WTC11 (cell line): ENCODE measurements at regions of chr12 and their contacts with region 1.

Region 1: DNA sequence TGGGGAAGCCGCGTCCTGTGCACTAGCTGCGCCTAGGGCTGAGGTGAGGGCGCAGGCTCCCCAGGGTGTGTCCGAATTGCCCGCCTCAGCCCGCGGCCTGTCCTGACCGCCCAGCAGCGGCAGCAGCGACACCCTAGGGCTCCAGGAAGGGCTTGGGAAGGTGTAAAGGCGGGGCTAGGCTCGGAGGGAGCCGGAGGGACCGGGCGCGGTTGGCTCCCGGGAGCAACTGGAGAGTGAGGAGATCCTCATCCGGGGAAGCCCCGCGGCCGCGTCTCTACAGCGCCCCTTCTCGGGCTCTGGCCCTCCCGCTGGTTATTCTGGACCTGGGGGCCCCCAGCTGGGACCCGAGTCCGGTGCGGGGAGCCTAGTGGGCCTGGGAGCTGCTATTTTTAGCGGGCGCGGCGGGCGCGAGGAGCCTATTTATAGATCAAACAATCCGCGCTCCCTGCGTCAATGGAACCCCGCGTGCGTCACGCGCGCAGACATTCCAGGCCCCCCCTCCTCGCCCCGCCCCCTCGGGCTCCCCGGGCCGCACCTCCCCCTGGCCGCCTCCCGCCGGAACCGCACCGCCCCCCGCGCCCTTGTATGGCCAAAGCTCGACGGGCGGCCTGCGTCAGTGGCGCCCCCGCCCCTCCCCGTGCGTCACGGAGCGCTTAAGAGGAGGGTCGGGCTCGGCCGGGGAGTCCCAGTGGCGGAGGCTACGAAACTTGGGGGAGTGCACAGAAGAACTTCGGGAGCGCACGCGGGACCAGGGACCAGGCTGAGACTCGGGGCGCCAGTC is at the start of gene NR4A1:
- DNase-seq: peak; percentile 90
- ATAC-seq: peak; percentile 68
- H3K4me3 Mint-ChIP-seq: peak within 1 kb of the TSS; percentile 86
- H3K27ac Mint-ChIP-seq: peak within 1 kb of the TSS; percentile 87
- H3K4me1 Mint-ChIP-seq: peaks cover 28% of the 10 kb centered on the region
- H3K27me3 Mint-ChIP-seq: peaks cover 50% of the 10 kb centered on the region
- CTCF ChIP-seq: no peak
- total RNA-seq, gene NR4A1: 19.2 to 26.9 TPM (median 22.0 TPM) in 3 replicates

Region 2: DNA sequence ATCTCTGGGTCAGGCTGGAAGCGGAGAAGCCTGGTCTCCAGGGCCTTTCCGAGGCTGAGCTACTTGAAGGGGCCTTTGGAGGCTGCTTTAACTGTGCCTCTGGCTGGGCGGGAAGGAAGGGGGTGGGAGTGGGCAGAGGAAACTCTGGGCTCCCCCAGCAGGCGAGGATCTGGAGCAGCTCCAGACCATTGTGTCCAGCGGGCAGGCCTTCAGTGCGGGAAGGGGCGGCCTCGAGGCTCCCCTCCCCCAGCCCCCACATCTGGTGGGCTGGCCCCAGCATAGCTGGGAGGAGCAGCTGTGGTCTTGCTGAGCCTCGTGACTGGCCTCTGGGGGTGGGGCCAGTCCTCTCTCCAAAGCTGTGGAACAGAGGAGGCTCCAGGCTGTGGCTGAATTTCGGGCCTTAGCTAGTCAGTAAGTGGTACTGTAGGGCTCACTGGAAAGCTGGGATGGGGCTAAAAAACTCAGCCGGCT is 40.8 kb before region 1 on chr12:
- CTCF ChIA-PET with region 1: interaction called, 10 read pairs
- POLR2A ChIA-PET with region 1: no interaction called
- DNase-seq: peak; percentile 81
- ATAC-seq: peak; percentile 75
- H3K4me3 Mint-ChIP-seq: no peak overlapping the region
- H3K27ac Mint-ChIP-seq: 0 out of 2 replicates have a peak overlapping the region, but pooled peaks have one; percentile 42
- H3K4me1 Mint-ChIP-seq: peaks cover 41% of the 10 kb centered on the region
- H3K27me3 Mint-ChIP-seq: peaks cover 68% of the 10 kb centered on the region
- CTCF ChIP-seq: no peak

Region 3: DNA sequence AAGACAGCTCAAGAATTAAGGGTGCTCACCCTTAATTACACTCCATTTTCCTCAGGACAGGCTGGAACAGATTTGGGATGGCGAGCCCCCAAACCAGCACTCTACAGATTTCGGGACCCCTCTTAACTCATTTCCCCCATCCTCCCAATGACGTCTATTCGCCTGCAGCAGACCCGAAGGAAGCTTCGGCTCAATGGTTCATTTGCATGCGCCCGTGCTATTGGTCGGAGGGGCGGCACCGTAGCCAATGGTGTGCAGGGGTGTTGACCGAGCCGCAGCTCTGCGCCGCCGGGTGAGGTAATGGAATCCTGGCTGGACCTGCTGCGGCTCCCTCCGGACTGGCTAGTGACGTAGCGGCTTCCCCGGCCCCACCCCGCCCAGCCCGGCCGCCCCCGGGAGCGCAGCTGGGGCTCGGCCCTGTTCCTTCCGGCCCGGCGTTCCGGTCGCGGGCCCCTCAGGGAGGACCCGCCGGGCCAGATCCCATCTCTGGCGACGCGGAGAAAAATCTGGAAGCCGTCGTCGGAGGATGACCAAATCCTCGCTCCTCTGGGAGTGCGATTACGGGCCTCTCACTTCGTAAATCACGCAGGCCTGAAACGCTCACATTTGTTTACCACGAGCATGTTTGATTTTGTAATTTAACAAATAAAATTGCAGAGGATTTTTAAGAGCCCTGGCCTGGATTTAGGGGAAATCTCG is 18.0 kb before region 1 on chr12:
- CTCF ChIA-PET with region 1: interaction called, 10 read pairs
- POLR2A ChIA-PET with region 1: interaction called, 11 read pairs
- DNase-seq: peak; percentile 97
- ATAC-seq: peak; percentile 93
- H3K4me3 Mint-ChIP-seq: peak overlapping the region; percentile 69
- H3K27ac Mint-ChIP-seq: peak overlapping the region; percentile 95
- H3K4me1 Mint-ChIP-seq: peaks cover 31% of the 10 kb centered on the region
- H3K27me3 Mint-ChIP-seq: peaks cover 46% of the 10 kb centered on the region
- CTCF ChIP-seq: no peak

Region 4: GRCh38 chr12:52063981-52064649 is 13.2 kb after region 1 on chr12:
- CTCF ChIA-PET with region 1: interaction called, 10 read pairs
- POLR2A ChIA-PET with region 1: interaction called, 3 read pairs
- DNase-seq: no peak
- ATAC-seq: no peak
- H3K4me3 Mint-ChIP-seq: no peak overlapping the region
- H3K27ac Mint-ChIP-seq: 0 out of 2 replicates have a peak overlapping the region, but pooled peaks have one; percentile 27
- H3K4me1 Mint-ChIP-seq: no peaks in the 10 kb centered on the region; the same call in 1 of the 2 replicates
- H3K27me3 Mint-ChIP-seq: peaks cover 6% of the 10 kb centered on the region
- CTCF ChIP-seq: no peak

Region 5: DNA sequence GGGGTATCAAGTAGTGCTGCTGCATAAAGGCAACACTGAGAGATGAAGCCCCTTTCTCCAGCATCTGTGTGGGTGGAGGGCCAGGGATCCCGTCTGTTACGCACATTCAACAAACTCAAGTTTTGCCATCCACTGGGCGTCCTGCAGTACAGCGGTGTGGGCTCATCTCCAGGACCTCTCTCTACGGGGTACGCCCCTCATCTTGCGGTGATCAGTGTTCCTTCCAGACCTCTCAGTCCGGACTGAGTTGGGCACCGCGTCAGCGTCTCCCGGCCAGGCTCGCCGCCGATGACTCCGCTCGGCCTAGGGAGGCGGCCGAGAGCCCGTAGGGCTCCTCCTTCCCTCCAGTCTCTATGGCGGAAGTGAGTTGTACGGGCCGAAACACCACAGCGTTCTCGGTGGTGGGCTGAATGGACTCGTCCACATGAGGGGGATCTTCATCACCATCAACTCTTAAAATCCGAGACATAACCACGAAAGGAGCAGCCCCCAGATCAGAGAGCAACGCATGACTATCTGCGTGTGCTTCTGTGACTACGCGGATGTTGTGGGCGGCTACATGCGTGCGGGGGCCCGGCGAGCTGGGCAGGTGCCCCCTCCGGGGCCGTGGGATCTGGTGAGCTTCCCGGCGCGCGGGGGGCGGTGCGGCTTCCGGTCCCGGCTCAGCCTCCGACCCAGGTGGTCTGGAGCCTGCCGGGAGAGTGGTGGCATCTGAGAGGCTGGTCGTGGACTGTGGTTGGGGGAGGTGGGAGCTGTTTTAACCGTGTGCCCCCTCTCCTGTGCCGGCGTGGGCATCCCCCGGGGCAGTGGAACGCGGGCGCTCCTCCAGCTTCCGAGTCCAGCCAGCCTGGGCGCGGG is 18.6 kb after region 1 on chr12 and contains the start of gene ATG101:
- CTCF ChIA-PET with region 1: interaction called, 10 read pairs
- POLR2A ChIA-PET with region 1: interaction called, 4 read pairs
- DNase-seq: peak; percentile 91
- ATAC-seq: peak; percentile 98
- H3K4me3 Mint-ChIP-seq: peak within 1 kb of the TSS; percentile 97
- H3K27ac Mint-ChIP-seq: peak within 1 kb of the TSS; percentile 99
- H3K4me1 Mint-ChIP-seq: peaks cover 14% of the 10 kb centered on the region
- H3K27me3 Mint-ChIP-seq: peaks cover 9% of the 10 kb centered on the region
- CTCF ChIP-seq: no peak
- total RNA-seq, gene ATG101: 43.3 to 52.1 TPM (median 45.0 TPM) in 3 replicates

Region 6: GRCh38 chr12:52171950-52172512 is 121.1 kb after region 1 on chr12:
- CTCF ChIA-PET with region 1: no interaction called
- POLR2A ChIA-PET with region 1: no interaction called
- DNase-seq: peak; percentile 79
- ATAC-seq: peak; percentile 71
- H3K4me3 Mint-ChIP-seq: no peak overlapping the region
- H3K27ac Mint-ChIP-seq: no peak overlapping the region
- H3K4me1 Mint-ChIP-seq: peaks cover 9% of the 10 kb centered on the region
- H3K27me3 Mint-ChIP-seq: no peaks in the 10 kb centered on the region
- CTCF ChIP-seq: 0 out of 2 replicates have a peak, but pooled peaks have one; percentile 25